ENCODE measurements at regions of chr15 and their contacts with region 1.

Region 1: GRCh38 chr15:33132722-33133345 is 61.7 kb downstream of the FMN1 start:
- DNase-seq: no peak
- ATAC-seq: peak; percentile 75

Region 2: DNA sequence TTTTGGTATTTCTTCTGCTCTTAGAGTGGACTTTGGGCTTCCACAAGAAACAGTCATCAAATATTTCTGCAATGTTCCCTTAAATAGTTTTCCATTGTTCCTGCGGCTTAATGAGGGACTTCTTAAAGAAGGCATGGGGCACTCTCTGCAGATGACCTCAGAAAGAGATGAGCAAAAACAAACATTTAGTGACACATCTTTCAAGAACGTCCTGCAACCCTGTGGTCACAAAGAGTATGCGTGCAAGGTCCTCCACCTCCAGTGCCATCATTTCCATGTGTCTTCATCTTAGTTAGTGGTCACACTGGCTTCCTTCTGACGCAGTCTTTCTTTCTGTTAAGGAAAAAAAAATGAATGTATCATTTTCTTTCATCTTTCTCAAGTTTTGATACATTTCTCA is 358.8 kb before region 1 on chr15:
- intact Hi-C with region 1: no loop called
- DNase-seq: no peak
- ATAC-seq: no peak

Region 3: GRCh38 chr15:33021806-33022389 is 110.9 kb before region 1 on chr15:
- intact Hi-C with region 1: loop called (anchors 10 kb)
- DNase-seq: no peak
- ATAC-seq: peak; percentile 79

Region 4: DNA sequence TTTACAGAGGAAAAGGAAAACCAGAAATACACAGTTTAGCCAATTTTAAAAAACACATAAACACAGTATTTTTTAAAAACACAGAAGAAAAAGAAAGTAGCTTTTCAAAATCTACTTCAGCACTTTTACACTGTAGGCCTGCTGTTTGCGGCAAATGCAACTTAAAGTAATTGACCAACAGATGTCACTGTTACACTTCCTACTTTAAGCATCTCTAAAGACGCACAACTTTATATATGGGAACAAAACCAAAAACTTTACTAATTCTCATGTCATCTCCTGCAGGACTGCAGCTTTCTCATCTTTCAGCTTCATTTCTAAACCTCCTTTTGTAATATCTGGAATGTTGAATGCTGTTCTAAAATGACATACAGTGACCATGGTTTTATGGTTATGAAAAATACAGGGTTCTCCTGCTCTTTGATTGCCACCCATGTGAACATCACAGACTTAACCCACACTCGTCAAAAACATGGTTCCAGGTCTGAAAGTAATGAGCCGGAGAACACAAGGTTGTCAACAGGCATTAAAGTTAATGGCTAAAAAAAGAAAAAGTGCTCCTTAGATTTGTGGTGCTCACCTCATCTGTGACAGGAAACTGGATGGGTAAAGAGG is 46.2 kb before region 1 on chr15:
- intact Hi-C with region 1: loop called (anchors 5 kb)
- DNase-seq: no peak
- ATAC-seq: peak; percentile 65

Region 5: DNA sequence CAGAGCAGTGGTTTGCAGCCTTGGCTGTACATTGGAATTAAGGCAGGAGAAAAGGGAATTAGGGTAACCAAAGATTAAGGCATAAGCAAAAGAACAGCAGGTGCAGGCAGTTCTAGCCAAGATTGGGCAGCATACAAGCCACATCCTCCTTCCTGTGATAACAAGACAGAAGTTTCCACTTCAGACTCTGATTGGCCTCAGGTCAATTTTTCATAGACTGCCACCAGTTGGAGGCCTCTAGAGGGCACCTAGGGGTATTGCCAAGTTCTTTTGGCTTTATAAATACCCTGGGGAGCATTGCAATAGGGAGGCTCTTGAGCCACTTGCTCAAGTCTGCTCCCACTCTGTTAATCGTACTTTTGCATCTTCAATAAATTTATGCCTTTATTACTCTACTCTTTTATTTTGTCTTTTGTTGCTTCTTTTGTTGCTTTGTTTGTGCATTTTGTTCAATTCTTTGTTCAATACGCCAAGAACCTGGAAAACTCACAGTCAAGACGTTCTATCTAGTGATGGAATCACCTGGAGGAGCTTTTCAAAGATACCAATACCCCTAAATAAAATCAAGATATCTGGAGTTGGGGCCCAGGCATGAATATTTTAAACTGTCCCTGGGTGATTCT is 93.8 kb after region 1 on chr15:
- intact Hi-C with region 1: no loop called
- DNase-seq: no peak
- ATAC-seq: peak; percentile 82